ENCODE measurements at regions of chr1 and their contacts with region 1.

Region 1: GRCh38 chr1:204516180-204516879 is at the start of gene MDM4:
- DNase-seq: peak; percentile 90
- H3K4me3 Mint-ChIP-seq: no peak within 1 kb of the TSS
- H3K27ac Mint-ChIP-seq: no peak within 1 kb of the TSS
- H3K4me1 Mint-ChIP-seq: peaks cover 45% of the 10 kb centered on the region
- H3K27me3 Mint-ChIP-seq: no peaks in the 10 kb centered on the region
- total RNA-seq, gene MDM4: 75.5 and 80.3 TPM in 2 replicates

Region 2: DNA sequence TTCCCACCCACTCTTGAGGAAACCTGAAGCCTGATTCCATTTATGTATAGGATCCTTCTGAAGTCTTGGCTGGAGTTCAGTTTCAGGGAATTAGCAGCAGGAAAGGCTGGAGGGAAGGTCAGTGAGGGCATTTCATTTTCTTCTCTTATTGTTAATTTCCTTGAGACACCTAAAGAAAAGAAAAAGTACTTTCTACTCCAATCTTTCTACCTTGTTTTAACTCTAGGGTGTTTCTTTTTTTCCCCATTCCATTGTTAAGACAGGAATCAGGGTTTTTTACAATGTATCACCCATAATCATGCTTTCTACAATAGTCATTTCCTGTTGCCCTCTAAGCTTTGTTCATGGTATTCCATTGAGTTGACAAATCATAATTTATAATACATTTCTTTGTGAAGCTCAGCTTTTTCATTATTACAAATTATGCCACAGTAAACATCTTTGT is 627.5 kb before region 1 on chr1:
- intact Hi-C with region 1: no loop called
- DNase-seq: no peak
- H3K4me3 Mint-ChIP-seq: no peak overlapping the region
- H3K27ac Mint-ChIP-seq: no peak overlapping the region
- H3K4me1 Mint-ChIP-seq: no peaks in the 10 kb centered on the region
- H3K27me3 Mint-ChIP-seq: peaks cover 2% of the 10 kb centered on the region

Region 3: DNA sequence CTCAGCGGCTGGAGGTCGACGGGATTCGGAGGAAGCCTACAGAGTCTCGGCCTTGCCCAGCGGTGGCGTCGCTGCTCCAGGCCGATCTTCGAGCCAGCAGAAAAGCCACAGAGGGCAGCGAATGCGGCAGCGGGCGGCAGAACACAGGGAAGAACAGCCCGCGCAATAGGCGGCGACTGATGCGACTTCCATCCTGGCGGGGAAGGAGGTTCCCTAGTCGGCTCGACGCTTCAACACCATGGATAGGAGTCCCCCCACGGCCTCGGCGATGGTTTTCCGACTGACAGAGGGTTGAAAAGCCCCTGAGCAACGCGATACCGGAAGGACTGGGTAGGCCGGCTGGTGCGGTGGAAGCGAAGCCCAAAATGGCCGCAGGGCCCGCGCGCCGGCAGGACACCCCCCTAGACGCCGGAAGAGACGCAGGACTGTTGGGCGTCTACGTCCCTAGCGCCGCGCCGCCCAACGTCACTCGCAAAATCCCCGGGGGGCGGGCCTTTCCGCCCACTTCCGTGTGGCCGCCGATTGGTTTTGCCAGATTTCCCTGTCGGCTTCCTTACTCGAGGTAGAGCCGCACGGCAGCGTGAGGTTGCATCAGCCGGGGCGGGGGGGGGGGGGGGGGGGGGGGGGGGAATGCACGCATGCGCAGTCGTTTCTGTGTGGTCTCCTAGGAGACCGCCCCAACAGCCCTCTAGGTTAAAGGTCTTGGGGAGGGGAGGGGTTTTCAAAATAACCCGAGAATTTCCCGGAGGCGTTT is 104.7 kb before region 1 on chr1 and contains the start of gene PPP1R15B:
- intact Hi-C with region 1: loop called (anchors 1 kb)
- DNase-seq: peak; percentile 98
- H3K4me3 Mint-ChIP-seq: peak within 1 kb of the TSS; percentile 99
- H3K27ac Mint-ChIP-seq: peak within 1 kb of the TSS; percentile 99
- H3K4me1 Mint-ChIP-seq: peaks cover 12% of the 10 kb centered on the region
- H3K27me3 Mint-ChIP-seq: no peaks in the 10 kb centered on the region
- total RNA-seq, gene PPP1R15B: 75.8 and 76.2 TPM in 2 replicates

Region 4: DNA sequence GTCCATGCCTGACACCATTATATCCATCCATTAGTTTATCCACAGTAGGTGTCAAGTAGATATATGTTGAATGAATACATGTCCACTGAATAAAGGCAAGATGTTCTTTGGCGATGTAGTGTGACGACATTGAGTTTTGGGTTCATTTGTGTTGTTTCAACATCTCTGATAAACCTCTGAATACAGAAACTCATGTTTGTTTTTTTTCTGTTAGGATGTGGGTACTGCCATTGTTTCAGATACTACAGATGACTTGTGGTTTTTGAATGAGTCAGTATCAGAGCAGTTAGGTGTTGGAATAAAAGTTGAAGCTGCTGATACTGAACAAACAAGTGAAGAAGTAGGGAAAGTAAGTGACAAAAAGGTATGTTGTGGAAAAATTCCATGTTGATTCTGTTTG is 28.0 kb after region 1 on chr1:
- intact Hi-C with region 1: loop called (anchors 1 kb)
- DNase-seq: no peak
- H3K4me3 Mint-ChIP-seq: peak overlapping the region; percentile 35
- H3K27ac Mint-ChIP-seq: peak overlapping the region; percentile 66
- H3K4me1 Mint-ChIP-seq: peaks cover 57% of the 10 kb centered on the region
- H3K27me3 Mint-ChIP-seq: no peaks in the 10 kb centered on the region

Region 5: DNA sequence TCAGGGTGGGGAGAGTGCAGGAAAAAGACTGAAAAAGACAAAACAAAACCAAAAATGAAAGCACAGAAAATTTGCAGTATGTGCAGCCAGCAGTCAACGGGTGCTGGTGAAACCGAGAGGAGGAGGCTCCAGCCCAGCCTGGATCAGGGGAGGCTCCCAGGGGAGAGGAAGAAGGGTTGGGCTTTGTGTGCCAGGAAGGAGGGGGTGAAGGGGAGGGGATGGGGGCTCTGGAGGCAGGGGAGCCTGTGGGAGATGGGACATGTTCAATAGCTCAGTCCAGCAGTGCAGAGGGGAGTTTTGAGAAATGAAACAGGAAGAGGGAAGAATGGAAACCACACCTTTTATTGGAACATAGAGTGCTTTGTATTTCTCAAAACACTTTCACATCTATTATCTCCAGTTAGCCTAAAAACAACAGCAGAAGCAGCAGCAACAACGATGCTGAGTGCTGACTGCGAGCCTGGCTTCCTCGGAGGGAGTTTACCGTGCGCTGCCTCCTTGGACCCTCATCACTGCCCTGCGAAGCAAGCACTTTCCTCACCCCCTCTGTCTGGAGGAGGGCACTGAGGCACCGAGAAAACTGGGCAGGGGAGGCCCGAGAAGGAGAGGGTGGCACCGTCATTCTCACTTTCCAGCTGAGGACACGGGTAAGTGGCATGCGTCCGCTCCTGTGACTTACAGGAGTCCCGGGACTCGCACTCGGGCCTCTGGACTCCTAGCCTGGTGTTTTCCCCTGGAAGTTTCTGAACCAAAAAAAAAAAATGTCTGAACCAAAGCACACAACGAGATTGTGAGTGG is 62.7 kb after region 1 on chr1:
- intact Hi-C with region 1: loop called (anchors 2 kb)
- DNase-seq: peak; percentile 42
- H3K4me3 Mint-ChIP-seq: peak overlapping the region; percentile 72
- H3K27ac Mint-ChIP-seq: peak overlapping the region; percentile 95
- H3K4me1 Mint-ChIP-seq: peaks cover 32% of the 10 kb centered on the region
- H3K27me3 Mint-ChIP-seq: no peaks in the 10 kb centered on the region

Region 6: DNA sequence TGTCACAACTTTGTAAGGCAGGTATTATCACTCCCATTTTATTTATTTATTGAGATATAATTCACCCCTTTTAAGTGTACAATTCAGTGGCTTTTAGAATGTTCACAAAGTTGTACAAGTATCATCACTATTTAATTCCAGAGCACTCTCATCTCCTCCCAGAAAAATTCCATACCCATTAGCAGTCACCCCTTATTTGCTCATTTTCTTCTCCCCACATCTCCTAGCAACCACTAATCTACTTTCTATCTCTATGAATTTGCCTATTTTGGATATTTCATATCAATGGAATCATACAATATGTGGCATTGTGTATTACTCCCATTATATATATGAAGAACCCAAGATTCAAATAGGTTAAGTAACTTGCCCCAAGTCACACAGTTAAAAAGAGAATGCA is 688.2 kb after region 1 on chr1:
- intact Hi-C with region 1: loop called (anchors 10 kb)
- DNase-seq: no peak
- H3K4me3 Mint-ChIP-seq: peak overlapping the region; percentile 63
- H3K27ac Mint-ChIP-seq: peak overlapping the region; percentile 76
- H3K4me1 Mint-ChIP-seq: peaks cover 60% of the 10 kb centered on the region
- H3K27me3 Mint-ChIP-seq: no peaks in the 10 kb centered on the region